ENCODE measurements at regions of chr15 and their contacts with region 1.

Region 1: DNA sequence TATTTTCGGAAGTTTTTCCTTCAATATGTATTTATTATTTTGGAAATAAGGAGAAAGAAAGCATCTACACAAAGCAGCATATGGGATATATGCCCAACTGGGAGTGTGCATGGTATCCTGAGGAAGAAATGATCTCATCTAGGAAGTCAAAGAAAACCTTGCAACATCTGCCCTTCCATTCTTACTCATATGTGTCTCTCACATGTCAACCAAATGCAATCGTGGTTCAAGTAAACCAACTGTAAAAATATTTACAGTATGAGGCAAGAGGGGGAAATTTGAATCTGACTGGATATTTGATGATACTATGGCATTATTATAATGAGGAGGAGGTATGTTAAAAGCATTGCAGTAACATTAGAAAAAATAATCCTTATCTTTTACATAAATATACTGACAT is 3.2 kb upstream of the SCG3 start:
- DNase-seq: no peak

Region 2: DNA sequence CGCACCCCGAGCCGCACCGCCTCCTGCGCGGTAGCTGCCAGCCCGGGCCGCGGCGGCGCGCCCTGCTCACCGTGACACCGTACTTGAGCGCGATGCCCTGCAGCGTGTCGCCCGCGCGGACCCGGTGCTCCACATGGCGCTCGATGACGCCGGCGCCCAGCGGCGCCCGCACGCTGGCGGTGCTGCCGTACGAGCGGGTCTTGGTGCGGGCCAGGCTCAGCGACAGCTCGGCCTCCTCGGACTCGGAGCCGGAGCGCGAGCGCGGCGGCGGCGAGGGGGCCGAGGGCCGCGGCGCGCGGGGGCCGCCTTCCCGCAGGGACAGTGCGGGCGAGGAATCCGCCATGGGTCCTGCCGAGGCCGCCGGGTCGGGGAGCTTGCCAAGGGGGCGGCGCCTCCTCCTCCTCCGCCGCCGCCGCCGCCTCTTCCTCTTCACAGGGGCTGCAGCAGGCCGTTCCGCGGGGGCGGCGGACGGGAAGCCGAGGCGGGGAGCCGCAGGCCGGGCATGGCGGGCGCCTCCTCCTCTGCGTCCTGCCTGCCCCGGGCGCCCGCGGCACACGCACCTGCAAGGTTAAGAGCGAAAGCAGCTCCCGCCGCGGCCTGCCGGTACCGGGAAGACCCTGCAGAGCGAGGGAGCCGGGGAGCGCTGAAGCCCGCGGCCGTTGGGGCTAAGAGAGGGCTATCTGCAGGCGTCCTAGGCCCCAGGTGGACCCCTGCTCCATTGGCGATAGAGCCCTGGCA is 59.4 kb after region 1 on chr15 and contains the start of gene LYSMD2:
- intact Hi-C with region 1: loop called (anchors 2 kb)
- DNase-seq: peak; percentile 92
- total RNA-seq, gene LYSMD2: 6.9 TPM